Activated CD8-positive, alpha-beta T cell treated with anti-CD3 and anti-CD28 coated beads for 36 hours (primary cell): ENCODE measurements at regions of chr14 and their contacts with region 1.

Region 1: DNA sequence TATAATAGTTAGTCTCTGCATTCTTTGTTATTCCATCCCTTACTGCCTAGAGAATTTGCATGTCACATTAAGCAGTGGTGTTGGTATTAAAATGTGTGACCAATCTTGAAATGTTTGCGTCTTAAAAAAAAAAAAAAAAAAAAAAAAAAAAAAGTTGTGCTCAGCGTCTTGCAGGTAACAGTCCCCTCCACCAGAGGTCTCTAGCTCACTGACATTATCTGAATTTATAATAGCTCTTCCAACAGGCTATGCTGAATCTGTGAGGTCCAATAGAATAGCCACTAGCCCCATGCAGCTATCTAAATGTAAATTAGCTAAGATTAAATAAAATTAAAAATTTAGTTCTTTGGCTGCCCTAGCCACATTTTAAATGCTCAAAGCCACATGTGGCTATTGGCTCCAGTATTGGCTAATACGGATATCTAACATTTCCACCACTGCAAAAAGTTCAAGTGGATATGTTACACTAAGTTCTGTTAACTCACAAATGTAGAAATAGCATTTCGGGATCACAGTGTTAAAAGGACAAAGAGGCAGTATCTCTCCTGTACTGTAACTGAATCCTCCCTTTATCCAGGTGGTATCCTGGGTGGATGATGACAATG is 28.7 kb downstream of the NKX2-8 start:
- DNase-seq: peak; percentile 20
- ATAC-seq: peak; percentile 58
- H3K4me3 Mint-ChIP-seq: no peak overlapping the region
- H3K27ac Mint-ChIP-seq: no peak overlapping the region
- H3K4me1 Mint-ChIP-seq: no peaks in the 10 kb centered on the region
- H3K27me3 Mint-ChIP-seq: peaks cover 8% of the 10 kb centered on the region
- CTCF ChIP-seq: peak; percentile 58

Region 2: DNA sequence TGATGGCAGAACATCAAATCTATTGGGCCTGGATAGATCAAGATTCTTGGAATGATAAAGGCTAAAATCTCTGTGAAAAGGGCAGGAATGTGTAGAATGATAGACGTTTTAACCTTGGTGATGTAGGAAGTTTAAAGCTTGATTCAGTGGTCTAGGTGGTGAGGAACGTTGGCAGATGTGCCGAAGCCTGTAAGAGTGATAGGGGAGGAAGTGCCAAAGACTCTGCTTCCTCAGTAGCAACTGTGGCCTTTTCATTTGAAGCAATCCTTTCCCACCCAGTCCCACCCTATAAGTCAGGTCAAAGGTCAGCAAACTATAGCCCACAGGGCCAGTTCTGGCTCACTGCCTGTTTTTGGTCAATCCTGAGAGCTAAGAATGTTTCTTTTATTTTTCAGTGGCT is 295.5 kb before region 1 on chr14:
- CTCF ChIA-PET with region 1: no interaction called
- POLR2A ChIA-PET with region 1: no interaction called
- intact Hi-C with region 1: no loop called
- DNase-seq: no peak
- ATAC-seq: no peak
- H3K4me3 Mint-ChIP-seq: no peak overlapping the region
- H3K27ac Mint-ChIP-seq: no peak overlapping the region
- H3K4me1 Mint-ChIP-seq: no peaks in the 10 kb centered on the region
- H3K27me3 Mint-ChIP-seq: peaks cover 4% of the 10 kb centered on the region
- CTCF ChIP-seq: no peak

Region 3: GRCh38 chr14:36538051-36538450 is 15.7 kb before region 1 on chr14:
- CTCF ChIA-PET with region 1: interaction called, 17 read pairs
- POLR2A ChIA-PET with region 1: no interaction called
- intact Hi-C with region 1: no loop called
- DNase-seq: no peak
- ATAC-seq: no peak
- H3K4me3 Mint-ChIP-seq: no peak overlapping the region
- H3K27ac Mint-ChIP-seq: no peak overlapping the region
- H3K4me1 Mint-ChIP-seq: no peaks in the 10 kb centered on the region
- H3K27me3 Mint-ChIP-seq: peaks cover 6% of the 10 kb centered on the region
- CTCF ChIP-seq: no peak

Region 4: DNA sequence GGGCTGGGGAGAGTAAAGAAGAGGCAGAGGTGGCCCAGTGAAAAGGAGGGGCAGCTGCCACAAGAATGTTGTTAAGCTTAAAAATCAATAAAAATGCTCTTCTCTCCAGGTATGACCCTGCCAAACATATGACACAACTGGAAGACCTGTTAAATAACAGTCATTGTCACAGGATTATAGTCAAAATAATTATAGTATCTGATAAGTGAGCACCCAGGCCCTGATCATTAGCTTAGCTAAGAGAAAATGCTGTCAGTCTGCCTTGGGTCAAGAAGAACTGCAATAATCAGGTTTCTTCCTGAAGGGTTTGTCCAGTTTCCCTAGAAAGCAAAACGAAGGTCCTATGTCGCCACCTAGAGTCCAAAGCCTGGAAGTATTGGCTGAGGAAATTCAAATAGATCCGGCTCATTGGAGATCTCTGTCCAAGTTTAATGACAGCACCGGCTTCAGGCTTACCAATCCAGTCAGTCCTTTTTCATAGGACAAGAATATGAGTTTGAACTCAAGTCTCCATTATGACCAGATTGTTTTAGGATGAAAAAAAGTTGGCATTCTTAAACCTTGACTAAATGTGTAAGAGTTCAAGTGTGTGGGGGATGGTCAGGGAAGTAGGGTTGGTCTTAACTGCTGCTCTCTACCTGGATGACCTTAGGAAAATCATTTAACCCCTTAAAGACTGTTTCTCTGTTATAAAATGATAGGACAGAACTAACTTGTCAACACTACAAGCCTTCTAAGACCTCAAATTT is 51.2 kb after region 1 on chr14:
- CTCF ChIA-PET with region 1: interaction called, 38 read pairs
- POLR2A ChIA-PET with region 1: no interaction called
- intact Hi-C with region 1: loop called (anchors 2 kb)
- DNase-seq: peak; percentile 54
- ATAC-seq: peak; percentile 58
- H3K4me3 Mint-ChIP-seq: no peak overlapping the region
- H3K27ac Mint-ChIP-seq: no peak overlapping the region
- H3K4me1 Mint-ChIP-seq: no peaks in the 10 kb centered on the region
- H3K27me3 Mint-ChIP-seq: peaks cover 3% of the 10 kb centered on the region
- CTCF ChIP-seq: peak; percentile 68